Activated naive CD4-positive, alpha-beta T cell treated with anti-CD3 and anti-CD28 coated beads for 36 hours (primary cell): ENCODE measurements at regions of chr16 and their contacts with region 1.

Region 1: DNA sequence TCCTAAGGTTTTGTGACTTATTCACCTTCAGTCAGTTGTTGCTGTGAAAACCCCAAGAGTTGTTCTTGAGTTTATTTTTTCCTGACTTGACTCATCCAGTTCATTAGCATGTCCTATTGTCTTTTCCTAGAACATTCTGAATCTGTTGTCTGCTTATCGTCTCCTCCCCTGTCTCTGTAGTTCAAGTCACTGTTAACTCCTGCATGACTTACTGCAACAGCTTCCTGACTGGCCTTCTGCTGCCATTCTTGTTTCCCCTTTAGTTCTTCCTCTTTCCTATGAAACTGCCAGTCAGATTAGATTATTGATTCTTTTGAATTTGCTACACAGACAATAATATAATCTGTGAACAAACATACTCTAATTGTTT is 161.5 kb downstream of the FTO start:
- DNase-seq: no peak
- H3K4me3 Mint-ChIP-seq: no peak overlapping the region
- H3K27ac Mint-ChIP-seq: peak overlapping the region; percentile 27
- H3K4me1 Mint-ChIP-seq: peaks cover 11% of the 10 kb centered on the region
- H3K27me3 Mint-ChIP-seq: no peaks in the 10 kb centered on the region

Region 2: DNA sequence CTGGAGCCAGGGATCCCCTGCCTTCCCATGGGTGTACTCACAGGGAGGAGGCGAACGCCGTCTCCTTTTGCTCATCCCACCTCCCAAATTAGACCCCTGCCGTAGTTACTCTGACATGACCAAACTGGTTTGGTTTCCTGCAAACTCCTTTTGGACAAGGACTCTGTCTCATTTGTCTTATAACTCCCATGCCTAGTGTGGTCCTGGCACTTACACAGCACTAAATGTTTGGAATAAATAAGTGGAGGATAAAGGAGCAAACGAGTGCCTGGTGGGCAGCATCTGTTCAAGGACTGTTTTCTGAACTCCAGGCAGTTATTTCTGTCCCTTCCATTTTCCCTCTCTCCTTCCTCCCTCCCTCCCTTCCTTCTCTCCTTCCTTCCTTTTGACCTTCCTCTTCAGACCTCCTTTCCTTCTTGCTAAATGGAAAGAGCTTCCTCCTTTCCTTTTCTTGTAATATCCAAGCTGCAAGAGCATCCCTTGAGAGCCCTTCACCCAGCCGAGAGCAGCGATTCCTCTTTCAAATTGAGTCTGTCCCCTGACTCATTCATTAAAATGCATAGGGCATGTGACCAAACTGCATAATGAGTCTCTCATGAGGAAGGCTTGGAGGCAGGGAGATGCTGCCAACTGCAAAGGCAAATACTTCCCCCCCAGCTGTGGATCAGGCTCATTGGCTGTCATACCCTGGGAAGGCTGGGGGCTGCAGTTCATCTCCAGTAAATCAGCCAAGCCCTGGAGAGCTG is 773.8 kb before region 1 on chr16:
- CTCF ChIA-PET with region 1: no interaction called
- intact Hi-C with region 1: no loop called
- DNase-seq: peak; percentile 42
- H3K4me3 Mint-ChIP-seq: no peak overlapping the region
- H3K27ac Mint-ChIP-seq: no peak overlapping the region
- H3K4me1 Mint-ChIP-seq: peaks cover 10% of the 10 kb centered on the region
- H3K27me3 Mint-ChIP-seq: peaks cover 2% of the 10 kb centered on the region

Region 3: GRCh38 chr16:53773150-53773846 is 92.2 kb before region 1 on chr16:
- CTCF ChIA-PET with region 1: no interaction called
- intact Hi-C with region 1: no loop called
- DNase-seq: peak; percentile 40
- H3K4me3 Mint-ChIP-seq: no peak overlapping the region
- H3K27ac Mint-ChIP-seq: no peak overlapping the region
- H3K4me1 Mint-ChIP-seq: peaks cover 31% of the 10 kb centered on the region
- H3K27me3 Mint-ChIP-seq: no peaks in the 10 kb centered on the region

Region 4: DNA sequence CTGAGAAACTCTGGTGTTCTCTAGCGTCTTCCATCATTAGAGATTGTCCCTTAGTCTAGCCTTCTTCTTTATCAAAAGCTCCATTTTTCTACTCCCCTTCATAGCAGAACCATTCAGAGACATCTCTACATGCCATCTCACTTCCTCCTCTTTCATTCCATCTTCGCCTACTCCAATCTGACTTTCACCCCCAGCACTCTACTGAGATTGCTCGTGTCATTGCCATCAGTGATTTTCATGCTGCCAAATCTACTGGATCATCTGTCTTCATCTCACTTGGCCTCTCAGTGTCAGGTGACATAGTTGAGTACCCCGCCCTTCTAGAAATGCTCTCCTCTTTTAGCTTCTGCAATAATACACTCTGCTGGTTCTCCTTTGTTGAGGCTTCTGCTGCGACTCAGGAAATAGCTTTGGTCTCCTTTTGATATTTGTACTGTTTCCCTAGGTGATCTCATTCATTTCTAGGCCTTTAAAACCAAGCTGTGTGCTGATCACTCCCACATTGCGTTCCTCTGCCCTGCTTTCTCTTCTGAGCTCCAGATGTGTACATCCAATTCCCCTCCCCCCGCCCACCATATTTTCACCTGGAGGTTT is 42.4 kb before region 1 on chr16:
- CTCF ChIA-PET with region 1: no interaction called
- intact Hi-C with region 1: loop called (anchors 2 kb)
- DNase-seq: peak; percentile 34
- H3K4me3 Mint-ChIP-seq: no peak overlapping the region
- H3K27ac Mint-ChIP-seq: no peak overlapping the region
- H3K4me1 Mint-ChIP-seq: peaks cover 19% of the 10 kb centered on the region
- H3K27me3 Mint-ChIP-seq: no peaks in the 10 kb centered on the region

Region 5: DNA sequence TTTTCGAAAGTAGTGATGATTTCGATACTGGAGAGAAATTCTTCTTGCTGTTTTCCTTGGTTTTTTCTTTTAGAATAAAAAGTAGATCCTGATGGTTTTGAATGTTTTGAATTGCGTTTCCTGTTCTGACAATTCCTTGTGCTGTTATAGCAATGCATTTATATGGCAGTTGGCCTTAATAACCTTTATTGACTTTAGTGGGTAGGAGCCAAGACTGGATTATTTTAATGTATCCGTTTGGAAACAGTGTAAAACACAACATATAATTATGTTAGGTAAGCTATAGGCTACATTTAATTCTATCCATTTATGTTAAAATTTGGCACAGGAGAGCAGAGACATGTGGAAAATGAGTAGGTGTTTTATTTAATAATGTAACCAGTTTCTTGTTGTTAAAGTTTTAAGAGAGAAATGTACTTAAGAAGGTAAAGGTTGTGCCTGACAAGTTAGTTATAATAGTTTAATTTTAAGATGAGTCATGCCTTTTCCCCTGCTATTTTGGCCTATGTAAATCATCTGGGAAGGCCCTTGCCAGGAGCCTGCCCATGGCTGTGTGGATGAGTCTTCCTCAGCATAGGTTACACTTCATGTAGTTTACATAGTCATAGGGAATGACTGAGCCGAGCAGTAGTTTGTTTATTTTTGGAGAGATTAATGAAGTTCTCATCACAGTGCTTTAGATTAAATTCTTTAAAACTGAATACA is 28.4 kb after region 1 on chr16:
- CTCF ChIA-PET with region 1: no interaction called
- intact Hi-C with region 1: no loop called
- DNase-seq: no peak
- H3K4me3 Mint-ChIP-seq: no peak overlapping the region
- H3K27ac Mint-ChIP-seq: no peak overlapping the region
- H3K4me1 Mint-ChIP-seq: peaks cover 9% of the 10 kb centered on the region
- H3K27me3 Mint-ChIP-seq: no peaks in the 10 kb centered on the region

Region 6: DNA sequence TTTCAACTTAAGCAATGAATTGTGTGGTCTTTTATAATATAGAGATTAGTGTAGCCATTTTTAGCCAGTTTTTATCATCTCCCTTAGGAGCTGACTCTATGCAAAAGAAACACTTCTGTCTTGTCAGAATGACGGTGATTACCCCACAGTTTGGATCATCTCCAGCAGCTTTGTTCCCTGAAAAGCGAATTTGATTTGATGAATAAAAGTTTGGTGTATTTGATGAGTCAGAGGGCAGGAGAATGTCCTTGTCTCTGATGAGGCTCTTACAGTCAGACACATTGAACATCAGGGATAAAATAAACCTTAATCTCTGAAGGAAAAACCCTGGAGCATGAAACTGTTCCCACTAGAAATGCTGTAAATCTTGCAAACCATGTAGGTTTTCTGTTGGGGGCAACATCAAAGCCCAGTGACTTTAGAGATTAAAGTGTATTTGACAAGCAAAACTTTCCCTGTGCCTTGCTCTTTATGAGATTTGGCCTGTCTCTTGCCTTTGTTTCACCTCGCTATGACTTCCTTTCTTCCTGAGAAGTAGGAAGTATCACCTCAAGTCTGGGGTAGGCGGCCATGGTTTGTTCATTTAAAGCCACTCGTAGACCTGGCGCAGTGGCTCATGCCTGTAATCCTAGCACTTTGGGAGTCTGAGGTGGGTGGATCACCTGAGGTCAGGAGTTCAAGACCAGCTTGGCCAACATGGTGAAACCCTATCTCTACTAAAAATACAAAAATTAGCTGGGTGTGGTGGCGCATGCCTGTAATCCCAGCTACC is 47.8 kb after region 1 on chr16:
- CTCF ChIA-PET with region 1: no interaction called
- intact Hi-C with region 1: loop called (anchors 2 kb)
- DNase-seq: peak; percentile 42
- H3K4me3 Mint-ChIP-seq: peak overlapping the region; percentile 23
- H3K27ac Mint-ChIP-seq: peak overlapping the region; percentile 79
- H3K4me1 Mint-ChIP-seq: peaks cover 8% of the 10 kb centered on the region
- H3K27me3 Mint-ChIP-seq: no peaks in the 10 kb centered on the region

Region 7: GRCh38 chr16:54385141-54385540 is 519.7 kb after region 1 on chr16:
- CTCF ChIA-PET with region 1: no interaction called
- intact Hi-C with region 1: no loop called
- DNase-seq: no peak
- H3K4me3 Mint-ChIP-seq: no peak overlapping the region
- H3K27ac Mint-ChIP-seq: no peak overlapping the region
- H3K4me1 Mint-ChIP-seq: no peaks in the 10 kb centered on the region
- H3K27me3 Mint-ChIP-seq: peaks cover 4% of the 10 kb centered on the region